ENCODE measurements at regions of chr2 and their contacts with region 1.

Region 1: GRCh38 chr2:38264396-38265281 is 112.4 kb downstream of the ATL2 start:
- DNase-seq: no peak
- H3K4me3 Mint-ChIP-seq: no peak overlapping the region
- H3K27ac Mint-ChIP-seq: no peak overlapping the region
- H3K4me1 Mint-ChIP-seq: peaks cover 35% of the 10 kb centered on the region
- H3K27me3 Mint-ChIP-seq: peaks cover 2% of the 10 kb centered on the region

Region 2: GRCh38 chr2:38037757-38038621 is 226.7 kb before region 1 on chr2:
- intact Hi-C with region 1: loop called (anchors 2 kb)
- DNase-seq: peak; percentile 5
- H3K4me3 Mint-ChIP-seq: peak overlapping the region; percentile 71
- H3K27ac Mint-ChIP-seq: peak overlapping the region; percentile 91
- H3K4me1 Mint-ChIP-seq: peaks cover 22% of the 10 kb centered on the region
- H3K27me3 Mint-ChIP-seq: peaks cover 22% of the 10 kb centered on the region

Region 3: GRCh38 chr2:38185012-38185491 is 79.6 kb before region 1 on chr2:
- intact Hi-C with region 1: loop called (anchors 5 kb)
- DNase-seq: no peak
- H3K4me3 Mint-ChIP-seq: no peak overlapping the region
- H3K27ac Mint-ChIP-seq: no peak overlapping the region
- H3K4me1 Mint-ChIP-seq: peaks cover 18% of the 10 kb centered on the region
- H3K27me3 Mint-ChIP-seq: peaks cover 18% of the 10 kb centered on the region

Region 4: GRCh38 chr2:38409156-38410122 is 144.8 kb after region 1 on chr2:
- intact Hi-C with region 1: no loop called
- DNase-seq: no peak
- H3K4me3 Mint-ChIP-seq: no peak overlapping the region
- H3K27ac Mint-ChIP-seq: no peak overlapping the region
- H3K4me1 Mint-ChIP-seq: no peaks in the 10 kb centered on the region
- H3K27me3 Mint-ChIP-seq: peaks cover 3% of the 10 kb centered on the region

Measured in activated T-helper 1 cell treated with anti-CD3 and anti-CD28 coated beads, Interleukin-12 subunit alpha, Interleukin-12 subunit beta, Interleukin-2, Interleukin-4 antibody, amounts not matched to agents 30 ng/mL and 10 ng/mL and 1 ng/mL, durations not matched to agents 14 hours and 24 hours and 36 hours (primary cell).